Panc1 (cell line): ENCODE measurements at regions of chr18 and their contacts with region 1.

Region 1: GRCh38 chr18:50847192-50847591 is 27.4 kb upstream of the MRO start:
- DNase-seq: no peak
- ATAC-seq: no peak
- H3K4me3 ChIP-seq: no peak overlapping the region
- H3K27ac ChIP-seq: no peak overlapping the region
- H3K4me1 ChIP-seq: no peaks in the 10 kb centered on the region
- H3K27me3 ChIP-seq: no peaks in the 10 kb centered on the region
- CTCF ChIP-seq: no peak

Region 2: DNA sequence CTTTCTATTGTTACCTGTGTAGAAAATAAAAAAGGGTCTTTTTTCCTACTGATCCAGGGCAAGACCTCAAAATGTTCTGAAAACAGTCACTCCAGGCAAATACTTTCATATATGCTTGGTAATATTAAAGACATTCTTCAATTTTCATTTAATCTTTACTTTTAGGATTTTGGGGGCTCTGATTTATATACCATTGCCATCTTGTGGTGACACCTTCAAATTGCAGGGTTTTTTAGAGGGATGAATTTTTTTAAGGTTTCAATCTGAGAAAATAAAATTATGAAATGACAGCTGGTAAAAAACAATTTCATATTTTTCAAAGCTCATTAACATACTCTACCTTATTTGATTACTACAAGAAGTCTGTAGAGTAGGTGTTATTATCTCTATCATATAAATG is 260.5 kb before region 1 on chr18:
- CTCF ChIA-PET with region 1: no interaction called
- POLR2A ChIA-PET with region 1: no interaction called
- in situ Hi-C with region 1: no loop called
- intact Hi-C with region 1: no loop called
- DNase-seq: no peak
- ATAC-seq: no peak
- H3K4me3 ChIP-seq: no peak overlapping the region
- H3K27ac ChIP-seq: no peak overlapping the region
- H3K4me1 ChIP-seq: no peaks in the 10 kb centered on the region
- H3K27me3 ChIP-seq: no peaks in the 10 kb centered on the region
- CTCF ChIP-seq: peak; percentile 9; the same call in 1 of the 2 replicates

Region 3: DNA sequence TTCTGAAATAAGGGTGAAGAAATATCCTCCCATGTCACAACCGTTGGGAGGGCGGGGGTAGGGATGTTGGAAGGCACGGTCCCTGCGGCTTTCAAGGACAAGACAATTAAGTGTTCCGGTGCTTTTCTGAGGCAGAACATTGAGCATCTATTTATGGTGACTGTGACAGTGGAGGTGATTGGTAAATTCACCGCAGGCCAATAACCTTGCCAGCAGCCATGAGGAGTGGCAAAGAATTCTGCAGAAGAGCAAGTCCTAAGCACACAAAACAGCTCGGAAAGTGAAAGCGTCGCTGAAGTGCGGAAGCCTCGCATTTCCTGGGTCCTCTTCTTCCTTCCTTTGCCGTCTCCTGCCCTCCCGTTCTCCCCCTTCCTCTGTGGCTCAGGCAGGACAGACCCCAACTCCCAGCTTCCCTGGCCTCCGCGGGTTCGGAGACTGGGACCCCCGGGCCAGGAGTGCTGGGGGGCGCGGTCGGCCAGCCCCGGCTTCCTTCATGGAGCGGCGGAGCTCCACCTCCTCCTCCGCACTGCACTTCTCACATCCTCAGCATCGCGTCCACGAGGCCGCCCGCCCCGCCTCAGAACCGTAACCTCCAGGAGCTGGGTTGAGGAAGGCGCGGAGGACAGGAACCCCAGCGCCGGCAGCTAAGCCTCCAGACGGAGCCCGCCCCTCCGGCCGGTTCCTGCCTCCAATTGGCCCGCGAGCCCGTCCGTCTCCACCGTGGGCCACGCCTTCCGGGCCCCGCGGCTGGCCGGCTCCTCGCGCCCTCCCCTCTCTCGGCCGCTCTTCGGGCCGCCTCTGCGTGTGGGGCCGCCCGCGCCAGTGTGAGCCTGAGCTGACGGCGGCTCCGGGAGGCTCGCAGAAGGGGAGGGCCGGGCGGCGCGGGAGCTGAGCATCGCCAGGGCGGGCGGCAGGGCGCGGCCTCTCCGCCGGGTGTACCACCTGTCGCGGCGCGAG is 31.4 kb after region 1 on chr18 and contains the start of gene ME2:
- CTCF ChIA-PET with region 1: no interaction called
- POLR2A ChIA-PET with region 1: interaction called, 12 read pairs
- in situ Hi-C with region 1: no loop called
- intact Hi-C with region 1: no loop called
- DNase-seq: no peak
- ATAC-seq: peak; percentile 98
- H3K4me3 ChIP-seq: peak within 1 kb of the TSS; percentile 53 to 84
- H3K27ac ChIP-seq: peak within 1 kb of the TSS; percentile 83
- H3K4me1 ChIP-seq: peaks cover 13% of the 10 kb centered on the region
- H3K27me3 ChIP-seq: no peaks in the 10 kb centered on the region
- CTCF ChIP-seq: no peak
- total RNA-seq, gene ME2: 38.2 TPM